ENCODE measurements at regions of chr14 and their contacts with region 1.

Region 1: GRCh38 chr14:75864352-75864751 is 117.4 kb downstream of the TGFB3 start:
- DNase-seq: no peak
- H3K4me3 ChIP-seq: no peak overlapping the region
- H3K27ac ChIP-seq: no peak overlapping the region
- H3K4me1 ChIP-seq: peaks cover 32% of the 10 kb centered on the region
- H3K27me3 ChIP-seq: no peaks in the 10 kb centered on the region
- CTCF ChIP-seq: no peak
- POLR2A ChIP-seq: no peak

Region 2: GRCh38 chr14:75736845-75737481 is 127.4 kb before region 1 on chr14:
- CTCF ChIA-PET with region 1: no interaction called
- POLR2A ChIA-PET with region 1: no interaction called
- dilution Hi-C with region 1: no loop called
- intact Hi-C with region 1: no loop called
- DNase-seq: no peak
- H3K4me3 ChIP-seq: no peak overlapping the region
- H3K27ac ChIP-seq: no peak overlapping the region
- H3K4me1 ChIP-seq: no peaks in the 10 kb centered on the region
- H3K27me3 ChIP-seq: no peaks in the 10 kb centered on the region
- CTCF ChIP-seq: no peak
- POLR2A ChIP-seq: no peak

Region 3: GRCh38 chr14:75794615-75795038 is 69.7 kb before region 1 on chr14:
- CTCF ChIA-PET with region 1: interaction called, 18 read pairs
- POLR2A ChIA-PET with region 1: no interaction called
- dilution Hi-C with region 1: no loop called
- intact Hi-C with region 1: no loop called
- DNase-seq: peak; percentile 49
- H3K4me3 ChIP-seq: no peak overlapping the region
- H3K27ac ChIP-seq: no peak overlapping the region
- H3K4me1 ChIP-seq: no peaks in the 10 kb centered on the region
- H3K27me3 ChIP-seq: no peaks in the 10 kb centered on the region
- CTCF ChIP-seq: peak in 1 of 2 donors; percentile 31
- POLR2A ChIP-seq: no peak

Region 4: GRCh38 chr14:75851574-75851866 is 12.8 kb before region 1 on chr14:
- CTCF ChIA-PET with region 1: interaction called, 10 read pairs
- POLR2A ChIA-PET with region 1: no interaction called
- dilution Hi-C with region 1: no loop called
- intact Hi-C with region 1: no loop called
- DNase-seq: no peak
- H3K4me3 ChIP-seq: no peak overlapping the region
- H3K27ac ChIP-seq: no peak overlapping the region
- H3K4me1 ChIP-seq: no peaks in the 10 kb centered on the region
- H3K27me3 ChIP-seq: no peaks in the 10 kb centered on the region
- CTCF ChIP-seq: no peak
- POLR2A ChIP-seq: no peak

Region 5: GRCh38 chr14:75879031-75879430 is 14.7 kb after region 1 on chr14:
- CTCF ChIA-PET with region 1: interaction called, 21 read pairs
- POLR2A ChIA-PET with region 1: interaction called, 4 read pairs
- dilution Hi-C with region 1: no loop called
- intact Hi-C with region 1: no loop called
- DNase-seq: peak; percentile 95
- H3K4me3 ChIP-seq: no peak overlapping the region
- H3K27ac ChIP-seq: peak overlapping the region; percentile 95
- H3K4me1 ChIP-seq: peaks cover 23% of the 10 kb centered on the region
- H3K27me3 ChIP-seq: no peaks in the 10 kb centered on the region
- CTCF ChIP-seq: no peak
- POLR2A ChIP-seq: peak; percentile 59

Region 6: DNA sequence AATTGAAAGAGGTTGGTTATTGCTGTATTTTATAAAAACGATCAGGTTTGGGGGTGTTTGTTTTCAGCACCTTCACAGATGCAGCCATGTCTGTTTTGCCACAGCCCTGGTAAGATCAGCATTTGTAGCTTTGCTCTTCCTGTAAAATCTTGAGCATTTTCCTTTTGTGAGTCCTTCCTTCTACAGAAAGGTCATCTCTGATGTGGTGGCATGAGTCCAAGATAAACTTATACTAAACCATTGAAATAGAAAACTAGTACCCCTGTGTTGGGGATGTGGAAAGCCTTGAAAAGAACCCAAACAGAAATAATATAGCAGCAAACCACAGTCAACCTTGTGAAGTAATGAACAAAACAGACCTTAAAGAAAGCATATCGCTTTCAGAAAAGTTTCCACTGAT is 32.0 kb after region 1 on chr14:
- CTCF ChIA-PET with region 1: interaction called, 3 read pairs
- POLR2A ChIA-PET with region 1: interaction called, 6 read pairs
- dilution Hi-C with region 1: no loop called
- intact Hi-C with region 1: loop called (anchors 2 kb)
- DNase-seq: peak; percentile 61
- H3K4me3 ChIP-seq: no peak overlapping the region
- H3K27ac ChIP-seq: no peak overlapping the region
- H3K4me1 ChIP-seq: peaks cover 12% of the 10 kb centered on the region
- H3K27me3 ChIP-seq: no peaks in the 10 kb centered on the region
- CTCF ChIP-seq: no peak
- POLR2A ChIP-seq: no peak

Region 7: GRCh38 chr14:75946785-75947184 is 82.4 kb after region 1 on chr14:
- CTCF ChIA-PET with region 1: no interaction called
- POLR2A ChIA-PET with region 1: no interaction called
- dilution Hi-C with region 1: no loop called
- intact Hi-C with region 1: no loop called
- DNase-seq: no peak
- H3K4me3 ChIP-seq: no peak overlapping the region
- H3K27ac ChIP-seq: no peak overlapping the region
- H3K4me1 ChIP-seq: no peaks in the 10 kb centered on the region
- H3K27me3 ChIP-seq: no peaks in the 10 kb centered on the region
- CTCF ChIP-seq: no peak
- POLR2A ChIP-seq: no peak